Mammary epithelial cell (primary cell): ENCODE measurements at regions of chr18 and their contacts with region 1.

Region 1: DNA sequence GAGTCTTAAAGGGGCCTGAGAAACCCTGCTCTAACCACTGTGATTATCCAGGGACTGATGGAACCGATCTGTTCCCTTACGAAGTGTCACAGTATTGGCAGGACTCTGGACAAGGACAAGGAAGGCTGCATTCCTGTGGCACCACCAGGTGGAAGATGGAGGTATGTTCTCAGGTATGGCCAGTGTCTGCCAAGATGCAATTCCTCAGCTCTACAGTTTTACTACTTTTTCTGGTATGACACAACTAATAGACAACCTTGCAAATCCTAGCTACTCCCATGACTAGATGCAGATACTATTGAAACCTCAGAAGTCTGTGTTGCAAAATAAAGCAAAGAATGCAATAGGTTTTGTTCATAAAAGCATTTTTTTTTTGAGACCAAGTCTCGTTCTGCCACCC is 14.6 kb downstream of the RAB31 start:
- DNase-seq: peak; percentile 71
- H3K4me3 ChIP-seq: no peak overlapping the region
- H3K27ac ChIP-seq: no peak overlapping the region
- H3K4me1 ChIP-seq: peaks cover 19% of the 10 kb centered on the region
- H3K27me3 ChIP-seq: no peaks in the 10 kb centered on the region
- CTCF ChIP-seq: peak; percentile 75 to 88

Region 2: DNA sequence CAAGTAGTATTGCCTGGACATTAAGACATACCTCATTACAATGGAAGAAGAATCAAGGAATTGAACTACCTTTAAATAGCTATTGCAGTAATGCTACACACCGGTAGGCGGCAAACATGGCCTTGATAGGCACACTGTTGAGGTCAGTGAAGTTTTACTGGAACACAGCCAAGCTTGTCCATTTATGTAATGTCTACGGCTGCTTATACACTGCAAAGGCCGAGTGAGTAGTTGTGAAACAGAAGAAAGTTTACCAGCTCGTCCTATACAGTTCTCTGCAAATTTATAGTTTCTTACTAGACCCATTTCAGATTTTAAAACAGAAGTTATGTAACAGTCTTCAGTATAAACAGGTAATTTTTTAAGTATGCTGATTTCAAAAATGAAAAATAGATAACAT is 147.1 kb before region 1 on chr18:
- CTCF ChIA-PET with region 1: no interaction called
- dilution Hi-C with region 1: no loop called
- in situ Hi-C with region 1: no loop called
- intact Hi-C with region 1: loop called (anchors 1 kb)
- DNase-seq: peak; percentile 74
- H3K4me3 ChIP-seq: no peak overlapping the region
- H3K27ac ChIP-seq: peak overlapping the region; percentile 34
- H3K4me1 ChIP-seq: peaks cover 5% of the 10 kb centered on the region
- H3K27me3 ChIP-seq: no peaks in the 10 kb centered on the region
- CTCF ChIP-seq: peak; percentile 89 to 99

Region 3: GRCh38 chr18:9594823-9595596 is 127.7 kb before region 1 on chr18:
- CTCF ChIA-PET with region 1: no interaction called
- dilution Hi-C with region 1: no loop called
- in situ Hi-C with region 1: loop called in 1 of 2 experiments (anchors 10 kb)
- intact Hi-C with region 1: no loop called
- DNase-seq: peak; percentile 85
- H3K4me3 ChIP-seq: peak overlapping the region; percentile 21 to 37 (median 26)
- H3K27ac ChIP-seq: peak overlapping the region; percentile 73
- H3K4me1 ChIP-seq: peaks cover 26% of the 10 kb centered on the region
- H3K27me3 ChIP-seq: no peaks in the 10 kb centered on the region
- CTCF ChIP-seq: no peak

Region 4: GRCh38 chr18:9653390-9653789 is 69.3 kb before region 1 on chr18:
- CTCF ChIA-PET with region 1: no interaction called
- dilution Hi-C with region 1: no loop called
- in situ Hi-C with region 1: no loop called
- intact Hi-C with region 1: no loop called
- DNase-seq: no peak
- H3K4me3 ChIP-seq: no peak overlapping the region
- H3K27ac ChIP-seq: no peak overlapping the region
- H3K4me1 ChIP-seq: peaks cover 25% of the 10 kb centered on the region
- H3K27me3 ChIP-seq: no peaks in the 10 kb centered on the region
- CTCF ChIP-seq: no peak

Region 5: GRCh38 chr18:9673296-9674251 is 49.1 kb before region 1 on chr18:
- CTCF ChIA-PET with region 1: no interaction called
- dilution Hi-C with region 1: no loop called
- in situ Hi-C with region 1: no loop called
- intact Hi-C with region 1: loop called (anchors 2 kb)
- DNase-seq: peak; percentile 99
- H3K4me3 ChIP-seq: no peak overlapping the region
- H3K27ac ChIP-seq: peak overlapping the region; percentile 95
- H3K4me1 ChIP-seq: peaks cover 33% of the 10 kb centered on the region
- H3K27me3 ChIP-seq: no peaks in the 10 kb centered on the region
- CTCF ChIP-seq: peak; percentile 27 to 51

Region 6: GRCh38 chr18:9683407-9684396 is 39.0 kb before region 1 on chr18:
- CTCF ChIA-PET with region 1: interaction called, 3 read pairs
- dilution Hi-C with region 1: no loop called
- in situ Hi-C with region 1: no loop called
- intact Hi-C with region 1: loop called (anchors 1 kb)
- DNase-seq: peak; percentile 50
- H3K4me3 ChIP-seq: no peak overlapping the region
- H3K27ac ChIP-seq: no peak overlapping the region
- H3K4me1 ChIP-seq: peaks cover 6% of the 10 kb centered on the region
- H3K27me3 ChIP-seq: no peaks in the 10 kb centered on the region
- CTCF ChIP-seq: peak; percentile 36 to 59

Region 7: DNA sequence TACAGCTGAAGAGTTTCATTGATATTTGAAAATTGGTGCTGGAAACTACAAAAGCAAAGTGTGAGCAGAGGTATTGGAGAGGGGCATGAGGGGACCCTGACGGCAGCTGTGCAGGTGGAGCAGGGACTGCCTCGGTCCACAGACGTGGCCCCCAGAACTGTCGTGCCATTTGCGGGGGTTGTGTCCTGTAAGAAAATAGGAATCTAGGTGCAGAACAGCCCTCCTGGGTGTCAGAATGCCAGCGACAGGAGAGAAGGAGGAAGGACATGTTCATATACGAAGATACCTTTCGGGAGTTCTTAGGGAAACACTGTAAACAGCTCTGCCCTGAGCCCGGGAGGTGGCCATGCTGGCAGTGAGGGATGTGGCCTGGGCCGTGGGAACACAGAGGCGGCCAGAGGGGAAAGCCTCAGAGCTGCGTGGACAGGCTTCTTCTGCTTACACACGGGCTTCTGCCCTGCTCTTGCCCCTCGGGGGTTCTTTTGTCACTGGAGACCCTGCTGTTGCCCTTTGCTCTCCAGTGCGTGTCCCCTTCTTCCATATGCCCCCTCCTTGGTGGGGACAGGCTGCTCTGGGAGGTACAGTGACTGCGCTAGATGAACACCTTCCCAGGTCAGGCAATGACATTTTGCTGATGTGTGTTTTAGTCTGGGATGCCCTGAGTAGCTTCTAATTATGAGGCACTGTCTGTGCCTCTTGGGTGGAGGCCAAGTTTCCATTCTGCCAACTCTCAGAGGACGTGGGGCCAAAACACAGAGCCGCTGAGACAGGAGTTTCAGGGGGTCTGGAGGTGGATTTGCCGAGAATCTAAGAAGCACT is 81.2 kb after region 1 on chr18:
- CTCF ChIA-PET with region 1: no interaction called
- dilution Hi-C with region 1: no loop called
- in situ Hi-C with region 1: no loop called
- intact Hi-C with region 1: no loop called
- DNase-seq: no peak
- H3K4me3 ChIP-seq: no peak overlapping the region
- H3K27ac ChIP-seq: no peak overlapping the region
- H3K4me1 ChIP-seq: peaks cover 18% of the 10 kb centered on the region
- H3K27me3 ChIP-seq: no peaks in the 10 kb centered on the region
- CTCF ChIP-seq: no peak

Region 8: DNA sequence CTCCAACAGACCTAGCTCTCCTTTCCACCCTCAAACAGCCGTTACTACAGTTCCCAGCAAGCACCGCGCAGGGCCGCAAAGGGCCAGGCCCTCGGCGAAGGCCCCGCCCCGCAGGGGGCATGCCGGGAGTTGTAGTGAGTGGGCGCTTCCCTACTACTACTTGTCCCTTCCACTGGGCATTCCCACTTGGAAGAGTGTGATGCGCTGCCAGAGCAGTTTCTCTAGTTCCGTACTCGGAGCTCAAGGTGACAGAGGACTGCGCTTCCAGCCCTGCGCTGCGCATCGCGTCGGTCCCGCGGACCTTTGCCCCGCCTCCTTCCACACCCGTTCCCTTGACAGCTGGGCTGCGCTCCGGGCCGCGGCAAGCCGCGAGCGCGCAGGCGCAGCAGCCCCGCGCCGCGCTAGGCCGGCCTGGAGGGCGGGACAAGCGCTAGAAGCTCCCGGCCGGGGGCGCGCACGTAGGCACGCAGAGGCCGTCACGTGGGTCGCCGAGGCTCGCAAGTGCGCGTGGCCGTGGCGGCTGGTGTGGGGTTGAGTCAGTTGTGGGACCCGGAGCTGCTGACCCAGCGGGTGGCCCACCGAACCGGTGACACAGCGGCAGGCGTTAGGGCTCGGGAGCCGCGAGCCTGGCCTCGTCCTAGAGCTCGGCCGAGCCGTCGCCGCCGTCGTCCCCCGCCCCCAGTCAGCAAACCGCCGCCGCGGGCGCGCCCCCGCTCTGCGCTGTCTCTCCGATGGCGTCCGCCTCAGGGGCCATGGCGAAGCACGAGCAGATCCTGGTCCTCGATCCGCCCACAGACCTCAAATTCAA is 191.0 kb after region 1 on chr18 and contains the start of gene VAPA:
- CTCF ChIA-PET with region 1: no interaction called
- dilution Hi-C with region 1: no loop called
- in situ Hi-C with region 1: no loop called
- intact Hi-C with region 1: loop called (anchors 5 kb)
- DNase-seq: peak; percentile 97
- H3K4me3 ChIP-seq: peak within 1 kb of the TSS; percentile 94 to 99 (median 95)
- H3K27ac ChIP-seq: peak within 1 kb of the TSS; percentile 98
- H3K4me1 ChIP-seq: peaks cover 27% of the 10 kb centered on the region
- H3K27me3 ChIP-seq: no peaks in the 10 kb centered on the region
- CTCF ChIP-seq: no peak
- total RNA-seq, gene VAPA: 199 to 223 TPM

Region 9: GRCh38 chr18:9951022-9951859 is 228.6 kb after region 1 on chr18:
- CTCF ChIA-PET with region 1: no interaction called
- dilution Hi-C with region 1: no loop called
- in situ Hi-C with region 1: no loop called
- intact Hi-C with region 1: loop called (anchors 2 kb)
- DNase-seq: peak; percentile 46
- H3K4me3 ChIP-seq: no peak overlapping the region
- H3K27ac ChIP-seq: no peak overlapping the region
- H3K4me1 ChIP-seq: peaks cover 28% of the 10 kb centered on the region
- H3K27me3 ChIP-seq: no peaks in the 10 kb centered on the region
- CTCF ChIP-seq: peak; percentile 81 to 83